CD4-positive, alpha-beta memory T cell (primary cell): ENCODE measurements at regions of chr1 and their contacts with region 1.

Region 1: GRCh38 chr1:11979851-11980675 is at the start of gene MFN2:
- DNase-seq: peak; percentile 93 to 95 (median 93)
- H3K4me3 ChIP-seq: peak within 1 kb of the TSS; percentile 69 to 82
- H3K4me3 Mint-ChIP-seq: peak within 1 kb of the TSS; percentile 90 to 98 (median 93)
- H3K27ac ChIP-seq: peak within 1 kb of the TSS; percentile 93
- H3K27ac Mint-ChIP-seq: peak within 1 kb of the TSS; percentile 93 to 97 (median 96)
- H3K4me1 ChIP-seq: peaks cover 39% of the 10 kb centered on the region
- H3K4me1 Mint-ChIP-seq: peaks cover 30 to 53% (median 40%) of the 10 kb centered on the region in 4 donors
- H3K27me3 ChIP-seq: no peaks in the 10 kb centered on the region
- H3K27me3 Mint-ChIP-seq: no peaks in the 10 kb centered on the region
- total RNA-seq, gene MFN2: 44.0 to 53.7 TPM

Region 2: GRCh38 chr1:11805447-11806306 is 174.4 kb before region 1 on chr1 and contains the starts of genes CLCN6 and MTHFR:
- CTCF ChIA-PET with region 1: no interaction called
- POLR2A ChIA-PET with region 1: interaction called, 4 read pairs
- intact Hi-C with region 1: loop called (anchors 10 kb)
- DNase-seq: peak; percentile 97 to 99 (median 98)
- H3K4me3 ChIP-seq: peak within 1 kb of the TSS; percentile 37 to 86
- H3K4me3 Mint-ChIP-seq: peak within 1 kb of the TSS; percentile 96 to 100 (median 98)
- H3K27ac ChIP-seq: peak within 1 kb of the TSS; percentile 73
- H3K27ac Mint-ChIP-seq: peak within 1 kb of the TSS; percentile 92 to 100 (median 99)
- H3K4me1 ChIP-seq: peaks cover 55% of the 10 kb centered on the region
- H3K4me1 Mint-ChIP-seq: peaks cover 35 to 76% (median 58%) of the 10 kb centered on the region in 4 donors
- H3K27me3 ChIP-seq: no peaks in the 10 kb centered on the region
- H3K27me3 Mint-ChIP-seq: no peaks in the 10 kb centered on the region
- total RNA-seq, gene CLCN6: 20.8 to 20.9 TPM
- total RNA-seq, gene MTHFR: 52.7 to 54.2 TPM

Region 3: DNA sequence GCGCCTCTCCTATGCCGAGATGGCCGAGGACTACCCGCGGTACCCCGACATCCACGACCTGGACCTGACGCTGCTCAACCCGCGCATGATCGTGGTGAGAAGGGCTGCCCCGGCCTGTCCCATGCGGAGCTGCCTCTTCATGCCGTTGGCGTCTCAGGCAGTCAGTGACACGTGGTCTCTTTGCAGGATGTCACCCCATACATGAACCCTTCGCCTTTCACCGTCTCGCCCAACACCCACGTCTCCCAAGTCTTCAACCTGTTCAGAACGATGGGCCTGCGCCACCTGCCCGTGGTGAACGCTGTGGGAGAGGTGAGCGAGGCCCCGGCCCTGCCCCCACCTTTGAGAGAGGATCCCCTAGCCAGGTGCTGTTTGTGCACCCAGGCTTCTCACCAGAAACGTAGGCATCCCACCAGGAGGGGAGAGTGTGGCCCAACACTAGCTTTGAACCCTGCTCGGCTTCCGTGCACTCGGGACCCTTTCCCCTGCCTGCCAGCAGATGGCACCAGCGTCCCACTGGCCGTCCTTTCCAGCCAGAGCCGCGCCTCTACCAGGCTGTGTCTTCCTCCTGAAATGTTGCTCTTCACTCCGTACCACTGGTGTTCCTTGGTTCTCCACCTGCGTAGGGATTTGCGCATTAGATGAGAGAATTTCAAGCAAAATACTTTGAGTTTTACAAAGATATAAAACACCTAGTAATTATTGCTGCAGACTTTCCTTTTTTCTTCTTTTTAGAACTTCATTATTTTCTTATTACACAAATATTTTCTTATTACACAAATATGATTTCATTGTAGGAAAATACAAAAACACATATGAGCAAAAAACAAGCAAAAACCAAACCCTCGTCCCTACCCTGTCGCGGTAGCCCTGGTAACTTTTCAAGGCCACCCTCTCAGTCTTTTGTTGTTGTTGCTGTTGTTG is 141.5 kb before region 1 on chr1:
- CTCF ChIA-PET with region 1: interaction called, 4 read pairs
- POLR2A ChIA-PET with region 1: no interaction called
- intact Hi-C with region 1: loop called (anchors 5 kb)
- DNase-seq: peak; percentile 65 to 74 (median 72)
- H3K4me3 ChIP-seq: no peak overlapping the region
- H3K4me3 Mint-ChIP-seq: no peak overlapping the region
- H3K27ac ChIP-seq: no peak overlapping the region
- H3K27ac Mint-ChIP-seq: peak overlapping the region in 1 of 7 donors; percentile 24
- H3K4me1 ChIP-seq: peaks cover 3% of the 10 kb centered on the region
- H3K4me1 Mint-ChIP-seq: peaks cover 2 to 6% (median 4%) of the 10 kb centered on the region in 4 donors
- H3K27me3 ChIP-seq: no peaks in the 10 kb centered on the region
- H3K27me3 Mint-ChIP-seq: no peaks in the 10 kb centered on the region

Region 4: GRCh38 chr1:11925938-11926292 is 54.1 kb before region 1 on chr1:
- CTCF ChIA-PET with region 1: no interaction called
- POLR2A ChIA-PET with region 1: interaction called, 6 read pairs
- intact Hi-C with region 1: loop called (anchors 1 kb)
- DNase-seq: peak in 1 of 5 donors; percentile 47
- H3K4me3 ChIP-seq: no peak overlapping the region
- H3K4me3 Mint-ChIP-seq: no peak overlapping the region
- H3K27ac ChIP-seq: no peak overlapping the region
- H3K27ac Mint-ChIP-seq: peak overlapping the region in 1 of 7 donors; percentile 75
- H3K4me1 ChIP-seq: peaks cover 32% of the 10 kb centered on the region
- H3K4me1 Mint-ChIP-seq: peaks cover 22 to 49% (median 32%) of the 10 kb centered on the region in 4 donors
- H3K27me3 ChIP-seq: no peaks in the 10 kb centered on the region
- H3K27me3 Mint-ChIP-seq: no peaks in the 10 kb centered on the region

Region 5: DNA sequence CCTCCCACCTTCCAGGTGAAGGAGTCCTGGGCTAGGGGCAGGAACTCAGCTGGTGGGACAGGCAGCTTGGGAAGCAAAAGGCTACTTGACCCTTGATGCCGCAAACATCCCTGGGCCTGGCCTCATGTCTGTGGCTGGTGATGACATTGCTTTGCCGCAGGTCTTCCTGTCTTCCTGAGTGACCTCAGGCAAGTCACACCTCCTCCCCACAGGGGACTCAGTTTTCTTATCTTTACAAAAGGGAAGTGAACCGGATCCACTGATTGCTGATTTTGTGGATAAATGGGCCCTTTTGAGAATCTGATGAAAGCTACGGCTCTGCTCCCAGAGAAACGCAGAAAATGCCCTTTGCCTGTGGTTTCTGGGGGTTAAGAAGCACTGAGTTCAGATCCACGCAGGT is 24.9 kb before region 1 on chr1:
- CTCF ChIA-PET with region 1: no interaction called
- POLR2A ChIA-PET with region 1: no interaction called
- intact Hi-C with region 1: no loop called
- DNase-seq: no peak
- H3K4me3 ChIP-seq: no peak overlapping the region
- H3K4me3 Mint-ChIP-seq: no peak overlapping the region
- H3K27ac ChIP-seq: no peak overlapping the region
- H3K27ac Mint-ChIP-seq: no peak overlapping the region
- H3K4me1 ChIP-seq: no peaks in the 10 kb centered on the region
- H3K4me1 Mint-ChIP-seq: no peaks in the 10 kb centered on the region
- H3K27me3 ChIP-seq: no peaks in the 10 kb centered on the region
- H3K27me3 Mint-ChIP-seq: no peaks in the 10 kb centered on the region

Region 6: DNA sequence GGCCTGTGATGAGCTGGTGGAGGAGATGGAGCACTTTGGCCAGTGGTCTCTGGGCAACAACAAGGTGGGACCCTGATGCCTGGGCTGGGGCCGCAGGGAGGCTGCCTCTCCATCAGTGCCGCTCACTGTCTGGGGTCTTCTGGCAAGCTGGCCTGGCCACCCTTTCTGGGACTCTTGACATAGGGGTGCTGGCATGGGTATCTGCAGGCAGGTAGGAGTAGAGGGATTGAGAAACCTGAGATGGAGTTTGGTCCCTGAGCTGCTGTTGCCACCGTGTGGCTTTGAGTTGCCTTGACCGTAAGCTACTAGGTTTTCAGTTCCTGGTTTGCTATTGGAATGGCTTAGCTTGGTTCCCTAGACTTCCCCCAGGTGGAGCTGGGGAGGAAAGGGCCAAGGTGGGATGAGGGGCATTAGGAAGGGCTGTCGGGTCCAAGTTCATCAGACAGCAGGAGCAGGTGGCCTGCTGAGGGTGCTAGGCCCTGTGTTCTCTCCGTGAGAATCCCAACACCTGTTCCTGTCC is 13.0 kb before region 1 on chr1:
- CTCF ChIA-PET with region 1: no interaction called
- POLR2A ChIA-PET with region 1: interaction called, 11 read pairs
- intact Hi-C with region 1: no loop called
- DNase-seq: no peak
- H3K4me3 ChIP-seq: no peak overlapping the region
- H3K4me3 Mint-ChIP-seq: no peak overlapping the region
- H3K27ac ChIP-seq: no peak overlapping the region
- H3K27ac Mint-ChIP-seq: no peak overlapping the region
- H3K4me1 ChIP-seq: no peaks in the 10 kb centered on the region
- H3K4me1 Mint-ChIP-seq: no peaks in the 10 kb centered on the region
- H3K27me3 ChIP-seq: no peaks in the 10 kb centered on the region
- H3K27me3 Mint-ChIP-seq: no peaks in the 10 kb centered on the region

Region 7: GRCh38 chr1:12019858-12020509 is 39.9 kb after region 1 on chr1:
- CTCF ChIA-PET with region 1: interaction called, 4 read pairs
- POLR2A ChIA-PET with region 1: interaction called, 18 read pairs
- intact Hi-C with region 1: loop called (anchors 1 kb)
- DNase-seq: peak in 1 of 5 donors; percentile 5
- H3K4me3 ChIP-seq: peak overlapping the region; percentile 19 to 74
- H3K4me3 Mint-ChIP-seq: peak overlapping the region; percentile 89 to 96 (median 92)
- H3K27ac ChIP-seq: peak overlapping the region; percentile 74
- H3K27ac Mint-ChIP-seq: peak overlapping the region; percentile 29 to 96 (median 57)
- H3K4me1 ChIP-seq: peaks cover 17% of the 10 kb centered on the region
- H3K4me1 Mint-ChIP-seq: peaks cover 6 to 32% (median 12%) of the 10 kb centered on the region in 4 donors
- H3K27me3 ChIP-seq: no peaks in the 10 kb centered on the region
- H3K27me3 Mint-ChIP-seq: no peaks in the 10 kb centered on the region